OCI-LY7 (cell line): ENCODE measurements at regions of chr6 and their contacts with region 1.

Region 1: GRCh38 chr6:13487122-13488014 is at the start of gene GFOD1:
- DNase-seq: peak; percentile 91
- H3K4me3 ChIP-seq: peak within 1 kb of the TSS; percentile 74
- H3K27ac ChIP-seq: peak within 1 kb of the TSS; percentile 70
- H3K4me1 ChIP-seq: peaks cover 30% of the 10 kb centered on the region
- CTCF ChIP-seq: no peak
- total RNA-seq, gene GFOD1: 19.7 and 22.6 TPM in 2 replicates

Region 2: GRCh38 chr6:13355043-13355951 is 132.1 kb before region 1 on chr6:
- CTCF ChIA-PET with region 1: no interaction called
- POLR2A ChIA-PET with region 1: interaction called, 5 read pairs
- intact Hi-C with region 1: loop called (anchors 5 kb)
- DNase-seq: peak; percentile 45
- H3K4me3 ChIP-seq: peak overlapping the region; percentile 54
- H3K27ac ChIP-seq: peak overlapping the region; percentile 89
- H3K4me1 ChIP-seq: peaks cover 58% of the 10 kb centered on the region
- CTCF ChIP-seq: no peak

Region 3: DNA sequence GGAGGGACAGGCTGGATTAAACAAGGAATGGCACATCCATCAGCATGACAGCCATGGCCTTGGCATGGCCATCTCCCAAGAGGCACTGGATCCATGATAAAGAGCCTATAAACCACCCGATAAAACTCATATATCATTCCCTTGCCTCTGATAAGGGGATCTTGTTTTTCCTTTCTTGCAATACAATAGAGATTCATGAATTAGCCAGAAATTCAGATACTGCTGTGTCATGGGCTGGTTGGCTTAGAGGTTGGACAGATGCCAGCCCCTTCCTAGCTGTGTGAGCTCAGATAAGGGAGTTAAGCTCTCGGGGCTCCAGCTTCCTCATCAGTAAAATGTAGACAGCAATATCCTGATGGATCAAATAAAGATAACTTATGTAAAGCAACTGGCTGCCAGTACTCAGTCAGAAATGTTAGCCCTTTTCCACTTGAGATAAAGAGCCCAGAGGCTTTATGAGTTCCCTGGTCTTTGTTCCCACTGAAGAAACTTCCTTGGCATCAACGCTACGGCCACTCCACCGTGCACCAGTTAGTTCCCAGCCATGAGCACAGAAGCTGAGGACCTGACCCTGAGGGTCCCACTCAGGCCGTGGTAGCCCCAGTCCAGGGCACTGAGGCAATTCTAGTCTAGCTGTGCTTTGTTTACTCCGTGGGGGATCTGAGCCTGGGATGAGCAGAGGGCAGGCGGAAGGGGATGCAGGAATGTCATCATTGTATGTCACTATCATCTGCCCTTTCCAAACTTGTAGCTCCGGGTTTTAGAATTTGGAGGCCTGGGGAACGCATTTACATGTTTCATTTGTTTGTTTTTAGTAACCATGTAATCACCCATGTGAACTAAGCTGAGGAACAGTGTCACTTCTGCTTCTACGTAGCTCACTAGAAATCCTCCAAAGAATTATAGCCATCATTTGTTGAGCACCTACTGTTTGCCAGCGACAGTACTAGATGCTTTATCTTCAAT is 91.8 kb before region 1 on chr6:
- CTCF ChIA-PET with region 1: interaction called, 3 read pairs
- POLR2A ChIA-PET with region 1: interaction called, 4 read pairs
- intact Hi-C with region 1: loop called (anchors 1 kb)
- DNase-seq: peak; percentile 32
- H3K4me3 ChIP-seq: peak overlapping the region; percentile 46
- H3K27ac ChIP-seq: no peak overlapping the region
- H3K4me1 ChIP-seq: peaks cover 73% of the 10 kb centered on the region
- CTCF ChIP-seq: no peak

Region 4: GRCh38 chr6:13454286-13455221 is 32.8 kb before region 1 on chr6:
- CTCF ChIA-PET with region 1: no interaction called
- POLR2A ChIA-PET with region 1: interaction called, 25 read pairs
- intact Hi-C with region 1: no loop called
- DNase-seq: peak; percentile 41
- H3K4me3 ChIP-seq: peak overlapping the region; percentile 6
- H3K27ac ChIP-seq: peak overlapping the region; percentile 28
- H3K4me1 ChIP-seq: peaks cover 60% of the 10 kb centered on the region
- CTCF ChIP-seq: peak; percentile 68

Region 5: GRCh38 chr6:13526727-13527670 is 39.6 kb after region 1 on chr6:
- CTCF ChIA-PET with region 1: interaction called, 3 read pairs
- POLR2A ChIA-PET with region 1: interaction called, 7 read pairs
- intact Hi-C with region 1: loop called (anchors 1 kb)
- DNase-seq: peak; percentile 98
- H3K4me3 ChIP-seq: peak overlapping the region; percentile 59
- H3K27ac ChIP-seq: peak overlapping the region; percentile 99
- H3K4me1 ChIP-seq: peaks cover 84% of the 10 kb centered on the region
- CTCF ChIP-seq: peak; percentile 55

Region 6: DNA sequence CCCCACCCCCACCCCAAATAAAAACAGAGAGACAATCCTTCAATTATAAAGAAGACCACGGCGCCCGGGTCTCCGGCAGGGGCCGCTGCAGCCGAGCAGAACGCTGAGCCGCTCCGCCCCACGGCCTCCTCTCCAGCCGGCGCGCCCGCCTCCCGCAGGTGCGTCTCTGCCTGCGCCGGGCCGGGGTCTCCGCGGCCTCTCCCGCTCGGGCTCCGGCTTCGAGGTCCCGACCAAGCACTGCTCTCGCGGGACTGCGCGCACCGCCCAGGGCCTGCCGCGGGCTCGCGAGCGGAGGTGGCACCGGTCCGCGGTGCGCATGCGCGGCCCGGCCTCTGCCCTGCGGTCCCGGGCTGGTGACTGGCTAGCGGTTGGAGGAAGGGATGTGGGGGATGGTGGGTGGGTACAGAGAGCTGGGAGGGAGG is 86.8 kb after region 1 on chr6:
- CTCF ChIA-PET with region 1: interaction called, 3 read pairs
- POLR2A ChIA-PET with region 1: interaction called, 8 read pairs
- intact Hi-C with region 1: loop called (anchors 1 kb)
- DNase-seq: peak; percentile 98
- H3K4me3 ChIP-seq: peak overlapping the region; percentile 76
- H3K27ac ChIP-seq: peak overlapping the region; percentile 89
- H3K4me1 ChIP-seq: peaks cover 23% of the 10 kb centered on the region
- CTCF ChIP-seq: peak; percentile 64

Region 7: GRCh38 chr6:13814176-13814937 is 327.0 kb after region 1 on chr6 and contains the start of gene MCUR1:
- CTCF ChIA-PET with region 1: no interaction called
- POLR2A ChIA-PET with region 1: no interaction called
- intact Hi-C with region 1: loop called (anchors 2 kb)
- DNase-seq: peak; percentile 94
- H3K4me3 ChIP-seq: peak within 1 kb of the TSS; percentile 86
- H3K27ac ChIP-seq: peak within 1 kb of the TSS; percentile 87
- H3K4me1 ChIP-seq: peaks cover 30% of the 10 kb centered on the region
- CTCF ChIP-seq: peak; percentile 38; the same call in 1 of the 2 replicates
- total RNA-seq, gene MCUR1: 11.9 and 17.3 TPM in 2 replicates